MCF 10A (cell line): ENCODE measurements at regions of chr19 and their contacts with region 1.

Region 1: GRCh38 chr19:45439569-45440254 is 16.0 kb upstream of the ERCC1 start:
- DNase-seq: peak; percentile 73
- H3K4me3 Mint-ChIP-seq: peak overlapping the region; percentile 64
- H3K27ac Mint-ChIP-seq: no peak overlapping the region
- H3K4me1 Mint-ChIP-seq: peaks cover 17% of the 10 kb centered on the region
- H3K27me3 Mint-ChIP-seq: no peaks in the 10 kb centered on the region
- CTCF ChIP-seq: peak; percentile 98

Region 2: DNA sequence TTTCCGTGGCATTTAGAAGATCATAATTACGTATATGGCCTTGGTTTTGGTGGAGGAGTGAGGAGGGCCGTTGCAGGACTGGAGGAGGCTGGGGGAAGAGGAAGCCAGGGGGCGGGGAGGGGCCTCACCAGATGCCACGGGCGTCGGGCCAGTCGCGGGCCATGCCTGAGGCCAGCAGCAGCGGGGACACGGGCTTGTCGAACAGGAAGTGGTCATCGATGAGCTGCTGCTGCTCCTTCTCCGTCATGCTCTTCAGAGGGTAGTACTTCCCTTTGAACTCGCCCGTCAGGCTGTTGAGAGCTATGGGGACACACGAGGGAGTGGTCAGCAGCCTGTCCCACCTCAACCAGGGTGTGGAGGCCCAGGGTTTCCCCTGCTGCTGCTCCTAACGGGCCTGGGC is 128.1 kb before region 1 on chr19:
- CTCF ChIA-PET with region 1: no interaction called
- POLR2A ChIA-PET with region 1: no interaction called
- intact Hi-C with region 1: no loop called
- DNase-seq: no peak
- H3K4me3 Mint-ChIP-seq: no peak overlapping the region
- H3K27ac Mint-ChIP-seq: no peak overlapping the region
- H3K4me1 Mint-ChIP-seq: no peaks in the 10 kb centered on the region
- H3K27me3 Mint-ChIP-seq: peaks cover 26% of the 10 kb centered on the region
- CTCF ChIP-seq: no peak

Region 3: GRCh38 chr19:45455707-45456499 is 16.2 kb after region 1 on chr19:
- CTCF ChIA-PET with region 1: interaction called, 5 read pairs
- POLR2A ChIA-PET with region 1: interaction called, 12 read pairs
- intact Hi-C with region 1: no loop called
- DNase-seq: peak; percentile 98
- H3K4me3 Mint-ChIP-seq: peak overlapping the region; percentile 59
- H3K27ac Mint-ChIP-seq: peak overlapping the region; percentile 99
- H3K4me1 Mint-ChIP-seq: peaks cover 35% of the 10 kb centered on the region
- H3K27me3 Mint-ChIP-seq: no peaks in the 10 kb centered on the region
- CTCF ChIP-seq: no peak

Region 4: GRCh38 chr19:45469132-45469944 is 29.6 kb after region 1 on chr19:
- CTCF ChIA-PET with region 1: interaction called, 386 read pairs
- POLR2A ChIA-PET with region 1: interaction called, 148 read pairs
- intact Hi-C with region 1: loop called (anchors 1 kb)
- DNase-seq: peak; percentile 97
- H3K4me3 Mint-ChIP-seq: peak overlapping the region; percentile 82
- H3K27ac Mint-ChIP-seq: peak overlapping the region; percentile 97
- H3K4me1 Mint-ChIP-seq: no peaks in the 10 kb centered on the region
- H3K27me3 Mint-ChIP-seq: no peaks in the 10 kb centered on the region
- CTCF ChIP-seq: no peak

Region 5: GRCh38 chr19:45478454-45479238 is 38.9 kb after region 1 on chr19:
- CTCF ChIA-PET with region 1: interaction called, 386 read pairs
- POLR2A ChIA-PET with region 1: interaction called, 110 read pairs
- intact Hi-C with region 1: loop called (anchors 1 kb)
- DNase-seq: peak; percentile 95
- H3K4me3 Mint-ChIP-seq: peak overlapping the region; percentile 76
- H3K27ac Mint-ChIP-seq: peak overlapping the region; percentile 99
- H3K4me1 Mint-ChIP-seq: peaks cover 14% of the 10 kb centered on the region
- H3K27me3 Mint-ChIP-seq: no peaks in the 10 kb centered on the region
- CTCF ChIP-seq: peak; percentile 97

Region 6: GRCh38 chr19:45485305-45486077 is 45.8 kb after region 1 on chr19:
- CTCF ChIA-PET with region 1: interaction called, 386 read pairs
- POLR2A ChIA-PET with region 1: interaction called, 110 read pairs
- intact Hi-C with region 1: no loop called
- DNase-seq: peak; percentile 98
- H3K4me3 Mint-ChIP-seq: peak overlapping the region; percentile 87
- H3K27ac Mint-ChIP-seq: peak overlapping the region; percentile 42
- H3K4me1 Mint-ChIP-seq: peaks cover 5% of the 10 kb centered on the region
- H3K27me3 Mint-ChIP-seq: no peaks in the 10 kb centered on the region
- CTCF ChIP-seq: peak; percentile 76

Region 7: GRCh38 chr19:45558399-45558878 is 118.7 kb after region 1 on chr19:
- CTCF ChIA-PET with region 1: no interaction called
- POLR2A ChIA-PET with region 1: no interaction called
- intact Hi-C with region 1: no loop called
- DNase-seq: peak; percentile 85
- H3K4me3 Mint-ChIP-seq: no peak overlapping the region
- H3K27ac Mint-ChIP-seq: no peak overlapping the region
- H3K4me1 Mint-ChIP-seq: no peaks in the 10 kb centered on the region
- H3K27me3 Mint-ChIP-seq: no peaks in the 10 kb centered on the region
- CTCF ChIP-seq: peak; percentile 64